HCT116 (cell line): ENCODE measurements at regions of chr15 and their contacts with region 1.

Region 1: GRCh38 chr15:49235446-49236124 is 65.5 kb downstream of the GALK2 start:
- DNase-seq: peak; percentile 48
- ATAC-seq: peak; percentile 82
- H3K4me3 ChIP-seq: no peak overlapping the region
- H3K27ac ChIP-seq: no peak overlapping the region
- H3K4me1 ChIP-seq: no peaks in the 10 kb centered on the region
- H3K27me3 ChIP-seq: no peaks in the 10 kb centered on the region
- CTCF ChIP-seq: peak; percentile 46 to 79 (median 69); a peak in 5 of 6 replicates
- POLR2A ChIP-seq: no peak
- RAD21 ChIP-seq: peak; percentile 76

Region 2: DNA sequence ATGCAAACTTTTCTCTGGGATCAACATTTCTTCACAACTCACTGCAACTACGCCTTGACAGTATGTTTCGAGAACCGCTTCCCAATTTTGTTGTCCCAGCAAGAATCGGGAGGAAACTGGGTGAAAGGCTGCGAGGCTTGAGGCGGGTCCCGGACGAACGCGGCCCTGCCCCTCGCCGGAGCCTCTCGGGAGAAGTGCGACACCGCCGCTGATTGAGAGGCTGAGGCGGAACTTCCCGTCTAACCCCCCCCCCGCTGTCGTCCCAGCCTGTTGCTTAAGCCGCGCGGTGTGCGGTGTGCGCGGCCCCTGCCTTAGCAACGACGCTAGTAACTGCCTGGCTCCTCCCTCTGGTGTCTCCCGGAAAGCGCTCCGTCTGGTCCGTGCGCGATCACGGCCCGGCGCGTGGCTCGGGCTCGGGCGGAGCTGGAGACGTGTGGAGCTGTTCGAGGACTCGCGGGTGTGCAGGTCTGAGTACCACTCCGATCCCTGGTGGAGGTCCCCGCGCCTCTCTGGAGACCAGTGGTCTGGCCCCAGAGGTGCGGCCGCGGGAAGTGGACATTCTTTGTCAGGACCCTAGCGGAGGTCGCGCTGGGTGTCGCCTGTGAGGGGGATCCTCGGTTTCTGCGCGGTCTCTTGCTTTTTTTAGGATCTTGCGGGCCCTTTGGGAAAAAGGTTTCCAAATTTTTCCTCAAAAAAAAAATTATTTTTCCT is 385.2 kb after region 1 on chr15 and contains the starts of genes DTWD1 and FAM227B:
- CTCF ChIA-PET with region 1: no interaction called
- POLR2A ChIA-PET with region 1: no interaction called
- RAD21 ChIA-PET with region 1: no interaction called
- intact Hi-C with region 1: loop called (anchors 10 kb)
- DNase-seq: peak; percentile 93
- ATAC-seq: peak; percentile 99
- H3K4me3 ChIP-seq: peak within 1 kb of the TSS; percentile 63 to 88
- H3K27ac ChIP-seq: peak within 1 kb of the TSS; percentile 68
- H3K4me1 ChIP-seq: peaks cover 10 to 16% of the 10 kb centered on the region in 2 experiments; a peak in 3 of 4 replicates
- H3K27me3 ChIP-seq: no peaks in the 10 kb centered on the region
- CTCF ChIP-seq: no peak
- POLR2A ChIP-seq: peak; percentile 85
- RAD21 ChIP-seq: no peak
- total RNA-seq, gene DTWD1: 34.5 TPM
- total RNA-seq, gene FAM227B: 6.9 TPM

Region 3: GRCh38 chr15:49876401-49877038 is 640.9 kb after region 1 on chr15:
- CTCF ChIA-PET with region 1: interaction called, 8 read pairs
- POLR2A ChIA-PET with region 1: no interaction called
- RAD21 ChIA-PET with region 1: no interaction called
- intact Hi-C with region 1: loop called (anchors 5 kb)
- DNase-seq: peak; percentile 12
- ATAC-seq: peak; percentile 73
- H3K4me3 ChIP-seq: no peak overlapping the region
- H3K27ac ChIP-seq: no peak overlapping the region
- H3K4me1 ChIP-seq: no peaks in the 10 kb centered on the region
- H3K27me3 ChIP-seq: no peaks in the 10 kb centered on the region
- CTCF ChIP-seq: peak; percentile 39 to 58 (median 50); a peak in 5 of 6 replicates
- POLR2A ChIP-seq: no peak
- RAD21 ChIP-seq: peak; percentile 67

Region 4: DNA sequence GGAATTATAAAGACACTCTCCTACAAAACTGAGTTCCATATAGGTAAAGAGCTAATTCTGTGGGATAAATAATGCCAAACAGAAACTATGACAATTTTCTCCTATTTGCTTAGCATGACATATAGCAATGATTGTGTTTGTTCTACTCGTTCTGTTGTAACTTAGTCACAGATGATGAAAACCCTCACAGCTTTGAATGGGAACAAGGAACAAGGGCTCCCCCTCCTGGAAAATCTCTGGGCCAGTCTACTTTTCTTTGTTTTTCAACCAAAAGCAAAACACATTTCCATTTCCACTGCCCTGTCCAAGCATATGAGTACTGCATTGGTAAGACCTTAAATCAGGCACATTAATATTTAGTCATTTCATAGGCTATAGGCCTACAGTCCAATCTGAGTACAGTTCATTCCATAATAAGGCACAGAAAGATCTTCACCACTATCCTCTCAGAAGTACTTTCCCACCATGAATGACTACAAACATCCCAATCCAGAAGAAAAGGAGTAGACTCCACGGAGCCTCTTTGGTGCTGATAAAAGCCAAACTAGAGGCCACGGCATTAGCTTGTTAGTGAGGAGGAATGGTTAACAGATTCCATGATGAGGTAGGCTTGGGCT is 816.3 kb after region 1 on chr15:
- CTCF ChIA-PET with region 1: interaction called, 3 read pairs
- POLR2A ChIA-PET with region 1: no interaction called
- RAD21 ChIA-PET with region 1: no interaction called
- intact Hi-C with region 1: loop called (anchors 5 kb)
- DNase-seq: peak; percentile 41
- ATAC-seq: peak; percentile 73
- H3K4me3 ChIP-seq: no peak overlapping the region
- H3K27ac ChIP-seq: no peak overlapping the region
- H3K4me1 ChIP-seq: no peaks in the 10 kb centered on the region
- H3K27me3 ChIP-seq: no peaks in the 10 kb centered on the region
- CTCF ChIP-seq: peak; percentile 42 to 74 (median 64); a peak in 5 of 6 replicates
- POLR2A ChIP-seq: no peak
- RAD21 ChIP-seq: peak; percentile 72